ENCODE measurements at regions of chr11 and their contacts with region 1.

Region 1: GRCh38 chr11:9314291-9315036 is at the start of gene TMEM41B:
- DNase-seq: peak; percentile 97 to 100 (median 99)
- ATAC-seq: peak; percentile 93
- H3K4me3 ChIP-seq: peak within 1 kb of the TSS; percentile 86
- H3K4me3 Mint-ChIP-seq: peak within 1 kb of the TSS; percentile 97
- H3K27ac ChIP-seq: peak within 1 kb of the TSS; percentile 88 to 92
- H3K27ac Mint-ChIP-seq: peak within 1 kb of the TSS; percentile 96
- H3K4me1 ChIP-seq: peaks cover 22% of the 10 kb centered on the region
- H3K4me1 Mint-ChIP-seq: peaks cover 49% of the 10 kb centered on the region
- H3K27me3 ChIP-seq: no peaks in the 10 kb centered on the region
- H3K27me3 Mint-ChIP-seq: peaks cover 19% of the 10 kb centered on the region
- CTCF ChIP-seq: no peak
- total RNA-seq, gene TMEM41B: 41.4 to 42.7 TPM

Region 2: GRCh38 chr11:7759010-7759409 is 1555.5 kb before region 1 on chr11:
- CTCF ChIA-PET with region 1: no interaction called
- POLR2A ChIA-PET with region 1: no interaction called
- intact Hi-C with region 1: no loop called
- DNase-seq: no peak
- ATAC-seq: no peak
- H3K4me3 ChIP-seq: no peak overlapping the region
- H3K4me3 Mint-ChIP-seq: no peak overlapping the region
- H3K27ac ChIP-seq: no peak overlapping the region
- H3K27ac Mint-ChIP-seq: no peak overlapping the region
- H3K4me1 ChIP-seq: no peaks in the 10 kb centered on the region
- H3K4me1 Mint-ChIP-seq: no peaks in the 10 kb centered on the region
- H3K27me3 ChIP-seq: no peaks in the 10 kb centered on the region
- H3K27me3 Mint-ChIP-seq: peaks cover 8% of the 10 kb centered on the region
- CTCF ChIP-seq: no peak

Region 3: DNA sequence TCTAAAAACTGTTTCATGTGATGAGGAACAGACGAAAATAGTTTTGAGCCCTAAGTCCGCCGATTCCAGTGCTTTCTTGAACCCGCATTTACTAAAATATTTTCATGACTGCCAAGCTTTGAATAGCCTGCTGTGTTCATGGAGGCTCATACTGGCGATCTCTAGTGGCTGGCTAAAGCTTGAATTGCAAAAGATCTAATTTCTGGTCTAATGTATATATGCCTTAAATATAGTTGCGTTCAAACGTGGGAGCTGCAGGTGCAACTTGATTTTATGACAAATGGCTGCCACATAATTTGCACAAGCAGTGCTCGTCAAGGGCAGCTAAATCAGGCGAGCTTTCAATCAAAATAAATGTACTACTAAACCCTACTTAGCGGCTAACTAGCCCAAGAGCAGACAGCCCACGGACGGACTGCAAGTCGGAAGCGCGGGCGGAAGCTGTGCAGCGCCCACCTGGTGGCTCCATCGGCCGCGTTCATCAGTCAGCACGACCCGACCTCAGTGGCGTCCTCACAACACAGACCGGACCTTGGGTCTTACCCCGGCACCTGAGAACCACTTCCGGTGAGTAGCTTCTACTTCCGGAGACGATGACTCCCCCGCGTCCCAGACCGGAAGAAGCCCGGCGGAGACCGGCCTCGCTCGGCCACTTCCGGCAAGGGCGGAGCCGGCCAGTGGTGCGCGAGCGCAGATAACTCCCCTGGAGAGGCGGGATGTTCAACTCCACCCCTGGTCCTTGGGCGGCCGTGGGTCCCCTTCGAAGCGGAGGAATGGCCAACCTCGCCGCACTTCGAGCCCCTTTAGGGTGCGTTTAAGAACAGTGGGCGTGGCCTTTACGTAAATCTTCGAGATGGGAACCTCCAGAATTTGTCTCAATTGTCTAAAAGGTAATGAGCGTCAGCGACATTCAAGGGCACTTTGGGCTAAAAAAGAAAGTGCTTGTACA is 625.8 kb before region 1 on chr11:
- CTCF ChIA-PET with region 1: no interaction called
- POLR2A ChIA-PET with region 1: no interaction called
- intact Hi-C with region 1: loop called in 1 of 2 experiments (anchors 10 kb)
- DNase-seq: peak; percentile 46 to 89 (median 77)
- ATAC-seq: peak; percentile 76
- H3K4me3 ChIP-seq: peak overlapping the region; percentile 73
- H3K4me3 Mint-ChIP-seq: peak overlapping the region; percentile 96
- H3K27ac ChIP-seq: peak overlapping the region; percentile 73 to 84
- H3K27ac Mint-ChIP-seq: peak overlapping the region; percentile 90
- H3K4me1 ChIP-seq: peaks cover 26% of the 10 kb centered on the region
- H3K4me1 Mint-ChIP-seq: peaks cover 43% of the 10 kb centered on the region
- H3K27me3 ChIP-seq: no peaks in the 10 kb centered on the region
- H3K27me3 Mint-ChIP-seq: no peaks in the 10 kb centered on the region
- CTCF ChIP-seq: no peak

Region 4: GRCh38 chr11:9250139-9250582 is 64.3 kb before region 1 on chr11:
- CTCF ChIA-PET with region 1: no interaction called
- POLR2A ChIA-PET with region 1: interaction called, 18 read pairs
- intact Hi-C with region 1: loop called in 1 of 2 experiments (anchors 1 kb)
- DNase-seq: peak in 10 of 14 experiments; percentile 3 to 82 (median 38)
- ATAC-seq: peak; percentile 89
- H3K4me3 ChIP-seq: no peak overlapping the region
- H3K4me3 Mint-ChIP-seq: peak overlapping the region; percentile 64
- H3K27ac ChIP-seq: peak overlapping the region in 1 of 2 donors; percentile 25
- H3K27ac Mint-ChIP-seq: peak overlapping the region; percentile 72
- H3K4me1 ChIP-seq: peaks cover 67% of the 10 kb centered on the region
- H3K4me1 Mint-ChIP-seq: peaks cover 73% of the 10 kb centered on the region
- H3K27me3 ChIP-seq: no peaks in the 10 kb centered on the region
- H3K27me3 Mint-ChIP-seq: no peaks in the 10 kb centered on the region
- CTCF ChIP-seq: no peak

Region 5: DNA sequence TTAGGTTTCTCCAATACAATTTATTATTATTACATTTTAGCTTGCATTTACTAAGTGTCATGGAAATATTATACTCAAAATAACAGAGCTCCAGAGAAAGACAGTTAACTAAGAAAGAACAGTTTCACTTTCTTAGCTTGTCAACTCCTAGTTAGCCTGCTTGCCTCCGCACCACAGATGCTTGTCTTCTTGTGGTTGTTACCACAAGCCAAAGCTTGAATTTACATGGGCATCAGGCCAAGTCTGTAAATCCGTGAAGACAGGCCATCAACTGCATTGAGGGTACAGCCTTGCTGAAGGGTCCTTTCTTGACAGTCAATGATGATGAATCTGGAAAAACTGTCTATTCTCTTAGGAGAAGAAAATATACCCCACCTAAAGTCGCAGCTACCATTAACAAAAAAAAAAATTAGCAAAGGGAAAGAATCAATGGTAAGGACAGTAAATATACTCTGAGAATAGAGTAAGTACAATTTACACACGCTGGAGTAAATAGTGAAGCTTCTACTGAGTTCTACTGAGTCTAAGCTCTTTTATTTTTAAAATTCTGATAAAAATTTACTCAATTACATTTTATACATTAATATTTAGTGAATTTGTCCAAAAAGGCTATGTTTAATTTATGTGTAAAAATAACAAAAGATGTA is 33.7 kb before region 1 on chr11:
- CTCF ChIA-PET with region 1: interaction called, 4 read pairs
- POLR2A ChIA-PET with region 1: interaction called, 18 read pairs
- intact Hi-C with region 1: no loop called
- DNase-seq: peak in 13 of 14 experiments; percentile 27 to 85 (median 42)
- ATAC-seq: peak; percentile 92
- H3K4me3 ChIP-seq: peak overlapping the region; percentile 23
- H3K4me3 Mint-ChIP-seq: peak overlapping the region; percentile 67
- H3K27ac ChIP-seq: peak overlapping the region in 1 of 2 donors; percentile 29
- H3K27ac Mint-ChIP-seq: peak overlapping the region; percentile 72
- H3K4me1 ChIP-seq: peaks cover 13% of the 10 kb centered on the region
- H3K4me1 Mint-ChIP-seq: peaks cover 18% of the 10 kb centered on the region
- H3K27me3 ChIP-seq: no peaks in the 10 kb centered on the region
- H3K27me3 Mint-ChIP-seq: no peaks in the 10 kb centered on the region
- CTCF ChIP-seq: no peak

Region 6: DNA sequence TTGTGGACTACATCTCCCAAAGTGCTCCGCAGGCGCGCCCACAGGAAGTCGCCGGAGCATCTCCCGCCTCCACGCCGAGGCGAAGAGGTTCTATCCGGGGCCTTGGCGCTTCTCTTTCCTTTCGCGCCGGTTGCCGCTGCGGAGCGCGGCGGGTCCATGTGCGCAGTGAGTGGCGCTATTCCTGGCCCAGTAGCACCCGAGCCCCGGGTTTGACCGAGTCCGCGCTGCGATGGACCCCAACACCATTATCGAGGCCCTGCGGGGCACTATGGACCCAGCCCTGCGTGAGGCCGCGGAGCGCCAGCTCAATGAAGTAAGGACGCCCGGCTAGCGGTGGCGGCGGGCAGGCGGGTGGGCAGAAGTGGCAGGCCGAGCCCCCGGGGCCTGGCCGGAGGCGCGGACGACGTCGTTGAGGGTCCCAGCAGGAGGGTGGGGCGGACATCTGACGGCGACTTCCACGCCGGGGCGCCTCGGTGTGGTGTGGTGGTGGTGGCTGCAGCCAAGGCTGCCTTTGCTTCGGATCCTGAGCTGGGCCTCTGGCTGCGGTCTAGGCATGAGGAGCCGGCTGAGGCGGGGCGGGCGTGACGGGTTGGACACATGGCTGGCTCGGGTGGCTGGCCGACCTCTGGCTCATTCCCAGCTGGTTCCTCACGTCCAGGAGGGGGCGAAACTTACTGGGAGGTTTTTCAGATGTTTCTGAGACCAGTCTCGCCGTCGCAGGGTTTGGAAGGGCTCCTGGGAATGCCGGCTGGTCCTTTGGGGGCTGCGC is 70.3 kb after region 1 on chr11 and contains the start of gene IPO7:
- CTCF ChIA-PET with region 1: interaction called, 3 read pairs
- POLR2A ChIA-PET with region 1: interaction called, 34 read pairs
- intact Hi-C with region 1: loop called (anchors 1 to 2 kb)
- DNase-seq: peak; percentile 72 to 93 (median 84)
- ATAC-seq: peak; percentile 98
- H3K4me3 ChIP-seq: peak within 1 kb of the TSS; percentile 82
- H3K4me3 Mint-ChIP-seq: peak within 1 kb of the TSS; percentile 96
- H3K27ac ChIP-seq: peak within 1 kb of the TSS; percentile 69 to 78
- H3K27ac Mint-ChIP-seq: peak within 1 kb of the TSS; percentile 80
- H3K4me1 ChIP-seq: peaks cover 29% of the 10 kb centered on the region
- H3K4me1 Mint-ChIP-seq: peaks cover 42% of the 10 kb centered on the region
- H3K27me3 ChIP-seq: no peaks in the 10 kb centered on the region
- H3K27me3 Mint-ChIP-seq: no peaks in the 10 kb centered on the region
- CTCF ChIP-seq: no peak
- total RNA-seq, gene IPO7: 40.7 to 51.6 TPM

Region 7: GRCh38 chr11:10038521-10039315 is 724.3 kb after region 1 on chr11:
- CTCF ChIA-PET with region 1: no interaction called
- POLR2A ChIA-PET with region 1: no interaction called
- intact Hi-C with region 1: no loop called
- DNase-seq: no peak
- ATAC-seq: no peak
- H3K4me3 ChIP-seq: no peak overlapping the region
- H3K4me3 Mint-ChIP-seq: no peak overlapping the region
- H3K27ac ChIP-seq: no peak overlapping the region
- H3K27ac Mint-ChIP-seq: no peak overlapping the region
- H3K4me1 ChIP-seq: no peaks in the 10 kb centered on the region
- H3K4me1 Mint-ChIP-seq: no peaks in the 10 kb centered on the region
- H3K27me3 ChIP-seq: no peaks in the 10 kb centered on the region
- H3K27me3 Mint-ChIP-seq: no peaks in the 10 kb centered on the region
- CTCF ChIP-seq: no peak